WTC11 (cell line): ENCODE measurements at regions of chr7 and their contacts with region 1.

Region 1: DNA sequence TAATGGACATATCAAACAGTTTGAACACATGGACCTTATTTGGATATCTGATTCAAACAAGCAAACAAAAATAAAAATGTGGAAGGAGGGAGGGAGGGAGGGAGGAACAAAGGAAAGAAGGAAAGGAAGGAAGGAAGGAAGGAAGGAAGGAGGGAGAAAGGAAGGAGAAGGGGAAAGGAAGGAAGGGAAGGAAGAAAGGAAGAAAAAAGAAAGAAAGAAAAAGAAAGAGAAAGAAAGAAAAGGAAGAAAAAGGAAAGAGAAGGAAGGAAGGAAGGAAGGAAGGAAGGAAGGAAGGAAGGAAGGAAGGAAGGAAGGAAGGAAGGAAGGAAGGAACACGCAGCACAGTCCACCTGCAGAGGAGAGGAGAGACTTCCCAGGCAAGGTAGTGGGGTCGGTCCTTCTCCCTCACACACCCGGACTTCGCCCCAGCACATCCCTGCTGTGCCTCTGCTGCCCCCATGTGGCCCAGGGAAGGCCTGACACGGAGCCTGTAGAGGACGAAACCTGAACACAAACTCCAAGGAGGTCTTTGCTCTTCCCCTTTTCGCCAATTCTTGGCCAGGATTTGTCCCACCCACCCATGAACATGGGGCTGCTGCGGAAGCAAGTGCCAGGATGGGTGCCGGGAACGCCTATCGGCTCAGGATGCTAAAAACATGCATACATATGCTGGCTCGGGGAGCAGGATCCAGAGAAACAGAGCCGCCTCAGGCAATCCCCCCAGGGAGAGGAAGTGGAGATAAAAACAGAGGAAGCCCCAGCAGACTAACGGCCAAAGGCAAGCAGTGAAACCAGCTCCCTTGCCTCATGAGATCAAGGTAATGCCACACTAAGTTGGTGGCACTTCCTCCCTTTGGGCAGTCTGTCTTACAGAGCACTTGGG is 52.3 kb upstream of the DGKI start:
- DNase-seq: peak; percentile 91
- ATAC-seq: peak; percentile 96
- H3K4me3 Mint-ChIP-seq: peak overlapping the region; percentile 53
- H3K27ac Mint-ChIP-seq: peak overlapping the region; percentile 95
- H3K4me1 Mint-ChIP-seq: peaks cover 21% of the 10 kb centered on the region
- H3K27me3 Mint-ChIP-seq: no peaks in the 10 kb centered on the region
- CTCF ChIP-seq: peak; percentile 87

Region 2: GRCh38 chr7:137656227-137656849 is 242.7 kb before region 1 on chr7:
- CTCF ChIA-PET with region 1: interaction called, 13 read pairs
- POLR2A ChIA-PET with region 1: no interaction called
- DNase-seq: peak; percentile 79
- ATAC-seq: peak; percentile 65
- H3K4me3 Mint-ChIP-seq: no peak overlapping the region
- H3K27ac Mint-ChIP-seq: no peak overlapping the region
- H3K4me1 Mint-ChIP-seq: peaks cover 40% of the 10 kb centered on the region
- H3K27me3 Mint-ChIP-seq: no peaks in the 10 kb centered on the region
- CTCF ChIP-seq: peak; percentile 92

Region 3: DNA sequence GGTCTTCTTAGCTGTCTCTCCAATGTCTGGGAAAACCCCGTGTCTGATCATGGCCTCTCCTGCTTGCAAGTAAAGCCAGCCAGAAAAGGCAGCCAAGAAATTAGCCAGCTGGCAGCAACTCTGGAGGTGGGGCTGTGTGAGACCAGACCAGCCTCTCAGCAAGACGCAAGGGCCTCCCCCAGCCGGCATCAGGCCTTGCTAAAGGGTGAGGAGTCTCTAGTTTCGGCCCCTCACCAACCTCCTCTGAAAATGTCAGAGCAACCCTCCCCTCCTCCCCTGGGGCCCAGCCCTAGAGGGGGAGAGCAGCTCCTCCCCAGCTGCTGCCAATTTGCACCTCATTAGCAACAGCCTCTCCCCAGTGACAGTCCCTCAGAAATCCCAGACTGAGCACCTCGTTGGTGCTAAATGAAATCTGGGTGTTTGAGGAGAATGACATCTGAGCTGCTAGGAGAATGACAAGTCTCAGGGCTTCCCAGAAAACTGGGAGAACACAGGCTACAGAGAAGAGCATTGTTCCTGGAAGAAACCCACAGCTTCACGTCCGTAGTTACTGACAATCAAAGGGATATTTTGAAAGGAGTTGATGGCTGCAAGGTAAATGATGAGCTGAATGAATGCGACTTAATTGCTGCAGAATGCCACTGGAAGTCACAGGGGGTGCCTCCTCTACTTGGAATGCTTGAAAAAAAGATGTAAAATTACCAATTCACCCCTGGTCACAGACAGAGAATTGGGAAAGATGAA is 78.2 kb before region 1 on chr7:
- CTCF ChIA-PET with region 1: interaction called, 13 read pairs
- POLR2A ChIA-PET with region 1: no interaction called
- DNase-seq: peak; percentile 56
- ATAC-seq: peak; percentile 89
- H3K4me3 Mint-ChIP-seq: peak overlapping the region; percentile 23; the same call in 1 of the 2 replicates
- H3K27ac Mint-ChIP-seq: peak overlapping the region; percentile 24
- H3K4me1 Mint-ChIP-seq: peaks cover 40% of the 10 kb centered on the region
- H3K27me3 Mint-ChIP-seq: no peaks in the 10 kb centered on the region; the same call in 1 of the 2 replicates
- CTCF ChIP-seq: no peak

Region 4: DNA sequence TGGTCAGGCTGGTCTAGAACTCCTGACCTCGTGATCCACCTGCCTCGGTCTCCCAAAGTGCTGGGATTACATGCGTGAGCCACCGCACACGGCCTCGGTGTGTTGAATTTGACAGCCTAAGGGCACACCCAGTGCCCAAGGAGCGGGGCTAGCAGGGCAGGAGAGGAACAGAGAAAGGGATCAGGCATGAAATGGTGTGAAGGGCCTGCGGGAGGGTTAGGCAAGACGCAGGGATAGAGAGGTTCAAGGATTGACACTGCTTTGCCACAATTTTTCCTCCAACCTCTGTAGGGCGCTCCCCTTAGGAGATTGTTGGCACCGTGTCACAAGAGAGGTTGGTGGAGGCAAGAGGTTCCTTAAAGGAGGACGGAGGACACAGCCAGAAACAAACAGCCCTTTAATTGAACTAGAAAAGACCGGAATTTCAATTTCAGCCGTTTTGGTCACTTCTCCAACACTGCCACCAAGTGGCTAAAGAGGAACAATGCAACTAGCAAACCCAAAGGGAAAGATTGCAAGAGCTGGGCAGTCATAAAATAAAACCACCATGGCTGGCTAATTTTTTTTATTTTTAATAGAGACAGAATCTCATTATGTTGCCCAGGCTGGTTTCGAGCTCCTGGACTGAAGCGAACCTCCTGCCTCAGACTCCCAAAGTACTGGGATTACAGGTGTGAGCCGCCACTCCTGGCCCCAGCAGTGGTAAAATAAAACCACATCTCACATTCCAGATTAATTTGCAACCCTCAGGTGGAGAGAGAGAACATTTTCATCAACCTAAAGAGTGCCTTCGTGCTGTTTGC is 109.7 kb after region 1 on chr7:
- CTCF ChIA-PET with region 1: interaction called, 11 read pairs
- POLR2A ChIA-PET with region 1: no interaction called
- DNase-seq: no peak
- ATAC-seq: peak; percentile 71
- H3K4me3 Mint-ChIP-seq: no peak overlapping the region
- H3K27ac Mint-ChIP-seq: peak overlapping the region; percentile 91
- H3K4me1 Mint-ChIP-seq: peaks cover 18% of the 10 kb centered on the region
- H3K27me3 Mint-ChIP-seq: no peaks in the 10 kb centered on the region
- CTCF ChIP-seq: peak; percentile 82

Region 5: DNA sequence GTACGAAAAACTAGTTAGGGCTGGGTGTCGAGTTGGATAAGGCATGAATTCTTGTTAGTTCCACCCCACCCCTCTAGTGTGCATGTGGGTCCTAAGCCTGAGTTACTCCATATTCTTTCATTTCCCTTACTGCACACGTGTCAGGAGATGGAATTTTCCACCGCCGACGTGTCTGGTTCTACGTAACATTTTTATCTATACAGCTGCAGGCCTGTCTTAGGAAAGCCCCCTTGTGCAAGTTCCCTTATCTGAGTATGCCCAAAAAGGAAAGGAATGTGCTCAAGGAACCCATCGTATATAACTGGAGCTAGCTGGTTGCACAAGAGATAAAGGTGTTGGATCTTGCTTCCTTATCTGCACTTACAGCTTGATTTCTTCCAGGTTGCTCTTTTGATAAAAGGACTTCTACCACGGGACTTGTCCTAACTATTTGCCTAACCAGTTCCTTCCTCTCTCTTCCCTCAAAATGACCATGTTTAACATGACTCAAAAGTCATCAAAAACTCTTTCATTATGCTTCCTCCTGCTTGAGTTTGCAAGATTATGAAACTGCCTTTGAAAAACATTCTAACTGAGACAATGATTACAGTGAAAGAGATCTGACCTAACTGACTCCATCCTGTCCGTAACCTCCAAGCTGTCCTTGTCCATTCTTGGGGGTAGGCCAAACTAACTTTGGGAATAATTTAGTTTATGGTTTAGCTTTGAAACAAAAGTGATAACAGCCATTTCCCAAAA is 358.5 kb after region 1 on chr7:
- CTCF ChIA-PET with region 1: no interaction called
- POLR2A ChIA-PET with region 1: no interaction called
- DNase-seq: no peak
- ATAC-seq: no peak
- H3K4me3 Mint-ChIP-seq: no peak overlapping the region
- H3K27ac Mint-ChIP-seq: no peak overlapping the region
- H3K4me1 Mint-ChIP-seq: peaks cover 15% of the 10 kb centered on the region
- H3K27me3 Mint-ChIP-seq: peaks cover 3% of the 10 kb centered on the region; the same call in 1 of the 2 replicates
- CTCF ChIP-seq: no peak